Kidney (tissue), 22 donors: ENCODE measurements at regions of chr18 and their contacts with region 1.

Region 1: DNA sequence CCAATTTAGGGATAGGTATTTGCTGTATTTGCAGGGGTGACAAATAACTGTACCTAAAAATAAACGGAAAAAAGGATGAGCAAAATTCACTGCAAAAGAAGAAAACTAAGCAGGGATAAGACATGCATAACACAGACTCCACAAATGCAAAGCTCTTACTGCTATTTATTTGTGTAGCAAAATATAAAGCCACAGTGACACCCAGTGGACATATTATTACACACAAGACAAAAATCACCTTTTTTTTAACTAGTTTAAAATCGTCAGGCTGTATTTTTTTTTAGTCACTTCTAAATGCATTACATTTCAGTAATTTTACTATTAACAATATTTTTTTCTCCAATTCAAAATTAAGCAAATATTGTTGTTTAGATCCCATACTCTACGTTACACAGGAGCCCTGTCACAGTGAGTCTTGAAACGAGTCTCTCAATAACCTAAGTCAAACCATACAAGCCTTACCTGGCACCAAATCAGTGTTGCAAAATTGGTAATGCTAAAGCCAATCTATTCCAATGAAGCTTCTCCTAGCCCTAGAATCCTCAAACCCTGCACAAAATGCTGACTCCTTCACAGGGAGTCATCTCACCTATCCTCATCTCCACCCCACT is 23.7 kb downstream of the METTL4 start:
- DNase-seq: peak in 2 of 5 donors; percentile 72 to 78
- H3K4me3 ChIP-seq: no peak overlapping the region
- H3K27ac ChIP-seq: no peak overlapping the region
- H3K4me1 ChIP-seq: no peaks in the 10 kb centered on the region
- H3K27me3 ChIP-seq: no peaks in the 10 kb centered on the region
- CTCF ChIP-seq: peak; percentile 57

Region 2: GRCh38 chr18:1585879-1586488 is 961.6 kb before region 1 on chr18:
- intact Hi-C with region 1: loop called (anchors 10 kb)
- DNase-seq: peak in 2 of 5 donors; percentile 32 to 64
- H3K4me3 ChIP-seq: no peak overlapping the region
- H3K27ac ChIP-seq: no peak overlapping the region
- H3K4me1 ChIP-seq: no peaks in the 10 kb centered on the region
- H3K27me3 ChIP-seq: no peaks in the 10 kb centered on the region
- CTCF ChIP-seq: peak; percentile 4

Region 3: DNA sequence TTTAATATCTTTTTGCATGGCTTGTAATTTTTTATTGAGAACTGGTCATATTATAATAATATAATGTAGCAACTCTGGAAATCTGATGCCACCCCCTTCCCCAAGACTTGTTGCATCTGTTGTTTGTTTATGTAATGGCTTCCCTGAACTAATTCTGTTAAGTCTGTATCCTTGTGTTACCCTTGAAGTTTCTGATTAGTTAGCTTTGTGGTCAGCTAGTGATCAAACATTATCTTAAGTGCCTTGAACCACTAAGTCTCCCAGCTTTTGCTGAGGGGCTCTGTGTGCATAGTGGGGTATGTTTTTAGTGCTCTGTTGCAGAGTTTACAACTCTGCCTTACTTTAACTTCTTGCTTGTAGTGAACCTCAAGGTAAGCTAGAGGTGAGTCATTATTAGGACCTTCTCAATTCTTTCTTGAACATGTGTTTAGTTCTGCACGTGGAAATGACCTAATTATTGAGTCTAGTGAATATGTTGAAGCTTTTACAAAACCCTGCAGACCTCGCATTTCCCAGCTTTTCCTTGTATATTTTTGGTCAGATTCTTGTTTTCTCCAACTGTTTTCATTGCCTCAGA is 132.7 kb after region 1 on chr18:
- intact Hi-C with region 1: no loop called
- DNase-seq: no peak
- H3K4me3 ChIP-seq: no peak overlapping the region
- H3K27ac ChIP-seq: no peak overlapping the region
- H3K4me1 ChIP-seq: peaks cover 0 to 4% (median 2%) of the 10 kb centered on the region in 3 donors
- H3K27me3 ChIP-seq: no peaks in the 10 kb centered on the region
- CTCF ChIP-seq: no peak